MCF 10A (cell line): ENCODE measurements at regions of chr12 and their contacts with region 1.

Region 1: GRCh38 chr12:46430340-46430948 is 57.9 kb upstream of the SLC38A2 start:
- DNase-seq: peak; percentile 93
- H3K4me3 Mint-ChIP-seq: peak overlapping the region; percentile 61
- H3K27ac Mint-ChIP-seq: peak overlapping the region; percentile 95
- H3K4me1 Mint-ChIP-seq: peaks cover 33% of the 10 kb centered on the region
- H3K27me3 Mint-ChIP-seq: no peaks in the 10 kb centered on the region
- CTCF ChIP-seq: no peak

Region 2: GRCh38 chr12:46217541-46218321 is 212.7 kb before region 1 on chr12:
- CTCF ChIA-PET with region 1: no interaction called
- POLR2A ChIA-PET with region 1: no interaction called
- intact Hi-C with region 1: no loop called
- DNase-seq: no peak
- H3K4me3 Mint-ChIP-seq: no peak overlapping the region
- H3K27ac Mint-ChIP-seq: no peak overlapping the region
- H3K4me1 Mint-ChIP-seq: peaks cover 40% of the 10 kb centered on the region
- H3K27me3 Mint-ChIP-seq: no peaks in the 10 kb centered on the region
- CTCF ChIP-seq: no peak

Region 3: DNA sequence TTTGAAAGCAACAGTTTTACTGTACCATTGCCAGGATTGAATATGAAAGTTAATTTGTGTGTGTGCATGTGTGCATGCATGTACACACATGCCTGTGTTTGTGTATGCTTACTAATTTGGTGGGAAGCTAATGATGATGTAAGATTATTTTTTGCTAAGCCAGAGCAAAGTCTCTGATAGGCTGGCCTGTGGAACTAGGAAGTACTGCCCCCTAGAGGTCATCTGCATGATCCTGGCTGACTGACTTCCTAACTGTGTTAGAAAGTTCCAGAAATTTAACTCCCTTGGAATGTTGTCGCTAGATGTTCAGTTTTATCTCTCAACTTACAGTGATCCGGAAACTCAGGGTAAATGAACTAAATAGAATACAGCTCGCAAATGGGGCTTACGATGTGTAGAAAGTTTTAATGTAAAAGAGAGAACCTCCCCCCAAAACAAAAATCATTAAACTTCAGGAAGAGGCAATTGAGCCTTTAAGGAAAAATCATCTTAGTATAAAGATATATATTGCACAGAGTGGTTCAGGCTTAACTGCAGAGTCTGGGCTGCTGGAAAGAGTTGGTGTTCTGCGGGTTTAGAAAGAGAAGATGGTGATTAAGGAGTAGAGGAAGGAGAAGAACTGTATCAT is 127.3 kb before region 1 on chr12:
- CTCF ChIA-PET with region 1: no interaction called
- POLR2A ChIA-PET with region 1: no interaction called
- intact Hi-C with region 1: no loop called
- DNase-seq: peak; percentile 49
- H3K4me3 Mint-ChIP-seq: no peak overlapping the region
- H3K27ac Mint-ChIP-seq: no peak overlapping the region
- H3K4me1 Mint-ChIP-seq: no peaks in the 10 kb centered on the region
- H3K27me3 Mint-ChIP-seq: no peaks in the 10 kb centered on the region
- CTCF ChIP-seq: peak; percentile 32

Region 4: GRCh38 chr12:46382964-46383653 is 47.3 kb before region 1 on chr12:
- CTCF ChIA-PET with region 1: interaction called, 10 read pairs
- POLR2A ChIA-PET with region 1: interaction called, 120 read pairs
- intact Hi-C with region 1: loop called (anchors 1 kb)
- DNase-seq: peak; percentile 97
- H3K4me3 Mint-ChIP-seq: peak overlapping the region; percentile 91
- H3K27ac Mint-ChIP-seq: peak overlapping the region; percentile 97
- H3K4me1 Mint-ChIP-seq: peaks cover 33% of the 10 kb centered on the region
- H3K27me3 Mint-ChIP-seq: no peaks in the 10 kb centered on the region
- CTCF ChIP-seq: no peak

Region 5: GRCh38 chr12:46414591-46415268 is 15.7 kb before region 1 on chr12:
- CTCF ChIA-PET with region 1: no interaction called
- POLR2A ChIA-PET with region 1: interaction called, 14 read pairs
- intact Hi-C with region 1: no loop called
- DNase-seq: no peak
- H3K4me3 Mint-ChIP-seq: no peak overlapping the region
- H3K27ac Mint-ChIP-seq: no peak overlapping the region
- H3K4me1 Mint-ChIP-seq: peaks cover 18% of the 10 kb centered on the region
- H3K27me3 Mint-ChIP-seq: no peaks in the 10 kb centered on the region
- CTCF ChIP-seq: no peak

Region 6: DNA sequence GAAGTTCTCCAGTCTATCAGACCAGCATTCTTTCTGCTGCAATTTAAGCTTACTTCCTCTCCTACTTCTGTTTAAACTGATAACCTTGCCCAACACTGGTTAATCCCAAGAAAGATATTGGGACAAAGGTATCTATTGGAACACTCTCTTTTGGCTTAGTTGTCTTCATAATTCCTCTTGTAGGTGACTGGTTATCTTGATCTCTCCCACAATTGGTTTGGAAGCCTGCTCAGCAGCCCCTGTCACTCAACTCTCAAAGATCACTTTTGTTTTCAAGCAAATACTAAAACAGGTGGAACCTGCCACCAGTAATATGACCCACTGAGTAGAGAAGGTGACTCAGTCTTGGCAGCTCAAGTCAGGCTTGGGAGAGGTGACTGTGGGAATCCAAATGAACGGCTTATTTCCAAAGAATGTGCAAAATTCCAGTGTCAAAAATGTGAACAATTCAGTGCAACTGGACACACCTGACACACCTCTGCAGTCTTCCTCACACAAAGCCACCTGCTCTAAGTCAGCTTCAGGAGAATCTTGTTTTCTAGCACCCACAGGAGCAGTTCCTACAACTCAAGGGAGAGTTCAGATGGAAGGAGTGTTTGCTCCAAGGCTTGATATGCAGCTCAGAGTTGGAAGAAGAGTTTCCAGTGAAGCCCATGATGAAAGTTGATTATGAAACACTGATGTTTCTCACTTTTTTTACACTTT is 25.4 kb after region 1 on chr12:
- CTCF ChIA-PET with region 1: interaction called, 4 read pairs
- POLR2A ChIA-PET with region 1: interaction called, 38 read pairs
- intact Hi-C with region 1: no loop called
- DNase-seq: peak; percentile 55
- H3K4me3 Mint-ChIP-seq: peak overlapping the region; percentile 22
- H3K27ac Mint-ChIP-seq: peak overlapping the region; percentile 59
- H3K4me1 Mint-ChIP-seq: peaks cover 55% of the 10 kb centered on the region
- H3K27me3 Mint-ChIP-seq: no peaks in the 10 kb centered on the region
- CTCF ChIP-seq: no peak

Region 7: GRCh38 chr12:46523863-46524770 is 93.7 kb after region 1 on chr12:
- CTCF ChIA-PET with region 1: no interaction called
- POLR2A ChIA-PET with region 1: no interaction called
- intact Hi-C with region 1: no loop called
- DNase-seq: peak; percentile 73
- H3K4me3 Mint-ChIP-seq: peak overlapping the region; percentile 14
- H3K27ac Mint-ChIP-seq: peak overlapping the region; percentile 22
- H3K4me1 Mint-ChIP-seq: peaks cover 31% of the 10 kb centered on the region
- H3K27me3 Mint-ChIP-seq: no peaks in the 10 kb centered on the region
- CTCF ChIP-seq: no peak

Region 8: GRCh38 chr12:46546634-46547286 is 116.3 kb after region 1 on chr12:
- CTCF ChIA-PET with region 1: interaction called, 3 read pairs
- POLR2A ChIA-PET with region 1: interaction called, 28 read pairs
- intact Hi-C with region 1: loop called (anchors 2 kb)
- DNase-seq: no peak
- H3K4me3 Mint-ChIP-seq: no peak overlapping the region
- H3K27ac Mint-ChIP-seq: peak overlapping the region; percentile 98
- H3K4me1 Mint-ChIP-seq: peaks cover 55% of the 10 kb centered on the region
- H3K27me3 Mint-ChIP-seq: no peaks in the 10 kb centered on the region
- CTCF ChIP-seq: no peak